PC-9 (cell line): ENCODE measurements at regions of chr17 and their contacts with region 1.

Region 1: DNA sequence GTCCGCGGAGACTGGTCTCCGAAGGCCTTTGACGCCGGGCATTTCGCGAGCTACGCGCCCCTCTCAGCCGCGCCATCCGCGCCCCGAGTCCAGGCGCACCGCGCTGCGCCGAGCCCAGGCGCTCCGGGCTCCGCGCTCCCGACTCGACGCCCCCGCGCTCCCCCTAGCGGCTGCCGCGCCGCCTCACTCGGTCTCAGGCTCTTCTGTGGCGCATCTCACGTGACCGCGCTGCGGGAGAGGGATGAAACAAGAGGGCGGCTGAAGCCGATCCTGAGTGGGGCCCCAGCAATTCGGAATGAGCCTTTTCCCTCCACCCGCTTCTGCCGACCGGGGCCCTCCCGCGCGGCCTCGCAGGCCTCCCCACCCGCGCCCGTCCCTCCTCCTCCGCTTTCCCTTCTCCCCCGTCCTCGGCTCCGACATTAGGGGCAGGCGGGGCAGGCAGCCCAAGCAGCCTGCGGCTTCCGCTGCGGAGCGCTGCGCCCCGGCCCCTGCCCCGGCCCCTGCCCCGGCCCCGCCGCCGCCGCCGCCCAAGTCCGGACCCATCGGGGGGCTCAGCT is 42.5 kb upstream of the AMZ2 start:
- DNase-seq: peak; percentile 65 to 85
- H3K4me3 ChIP-seq: peak overlapping the region; percentile 74
- H3K27ac ChIP-seq: no peak overlapping the region
- H3K4me1 ChIP-seq: peaks cover 14% of the 10 kb centered on the region; the same call in 1 of the 2 replicates
- H3K27me3 ChIP-seq: no peaks in the 10 kb centered on the region
- CTCF ChIP-seq: peak; percentile 71

Region 2: GRCh38 chr17:67993596-67994361 is 211.6 kb before region 1 on chr17:
- CTCF ChIA-PET with region 1: no interaction called
- POLR2A ChIA-PET with region 1: no interaction called
- intact Hi-C with region 1: loop called (anchors 10 kb)
- DNase-seq: peak in 1 of 2 experiments; percentile 86
- H3K4me3 ChIP-seq: peak overlapping the region; percentile 63
- H3K27ac ChIP-seq: peak overlapping the region; percentile 78
- H3K4me1 ChIP-seq: peaks cover 29% of the 10 kb centered on the region
- H3K27me3 ChIP-seq: no peaks in the 10 kb centered on the region
- CTCF ChIP-seq: no peak

Region 3: DNA sequence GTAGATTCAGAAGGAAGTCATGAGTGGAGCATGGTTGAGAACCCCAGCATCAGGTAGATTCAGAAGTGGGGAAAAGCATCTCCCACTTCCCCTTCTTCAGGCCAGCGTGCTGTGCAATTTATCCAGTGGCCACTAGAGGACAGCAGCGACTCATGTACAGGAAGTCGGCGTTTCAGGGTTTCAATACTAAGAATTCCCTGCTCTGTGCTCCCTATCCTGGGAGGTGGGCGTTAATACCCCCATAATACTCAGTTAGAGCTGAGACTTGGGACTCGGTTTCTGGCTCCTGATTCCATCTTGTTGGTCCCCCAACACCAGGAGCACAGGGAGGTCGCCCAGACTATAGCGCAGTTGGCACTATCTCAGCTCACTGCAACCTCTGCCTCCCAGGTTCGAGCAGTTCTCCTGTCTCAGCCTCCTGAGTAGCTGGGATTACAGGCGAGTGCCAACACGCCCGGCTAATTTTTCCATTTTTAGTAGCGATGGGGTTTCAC is 32.8 kb before region 1 on chr17:
- CTCF ChIA-PET with region 1: no interaction called
- POLR2A ChIA-PET with region 1: no interaction called
- intact Hi-C with region 1: loop called (anchors 1 kb)
- DNase-seq: peak; percentile 40 to 61
- H3K4me3 ChIP-seq: no peak overlapping the region
- H3K27ac ChIP-seq: no peak overlapping the region
- H3K4me1 ChIP-seq: no peaks in the 10 kb centered on the region
- H3K27me3 ChIP-seq: no peaks in the 10 kb centered on the region
- CTCF ChIP-seq: peak; percentile 98

Region 4: GRCh38 chr17:68182011-68182306 is 23.4 kb before region 1 on chr17:
- CTCF ChIA-PET with region 1: interaction called, 10 read pairs
- POLR2A ChIA-PET with region 1: no interaction called
- intact Hi-C with region 1: no loop called
- DNase-seq: no peak
- H3K4me3 ChIP-seq: no peak overlapping the region
- H3K27ac ChIP-seq: no peak overlapping the region
- H3K4me1 ChIP-seq: peaks cover 25% of the 10 kb centered on the region
- H3K27me3 ChIP-seq: no peaks in the 10 kb centered on the region
- CTCF ChIP-seq: no peak

Region 5: DNA sequence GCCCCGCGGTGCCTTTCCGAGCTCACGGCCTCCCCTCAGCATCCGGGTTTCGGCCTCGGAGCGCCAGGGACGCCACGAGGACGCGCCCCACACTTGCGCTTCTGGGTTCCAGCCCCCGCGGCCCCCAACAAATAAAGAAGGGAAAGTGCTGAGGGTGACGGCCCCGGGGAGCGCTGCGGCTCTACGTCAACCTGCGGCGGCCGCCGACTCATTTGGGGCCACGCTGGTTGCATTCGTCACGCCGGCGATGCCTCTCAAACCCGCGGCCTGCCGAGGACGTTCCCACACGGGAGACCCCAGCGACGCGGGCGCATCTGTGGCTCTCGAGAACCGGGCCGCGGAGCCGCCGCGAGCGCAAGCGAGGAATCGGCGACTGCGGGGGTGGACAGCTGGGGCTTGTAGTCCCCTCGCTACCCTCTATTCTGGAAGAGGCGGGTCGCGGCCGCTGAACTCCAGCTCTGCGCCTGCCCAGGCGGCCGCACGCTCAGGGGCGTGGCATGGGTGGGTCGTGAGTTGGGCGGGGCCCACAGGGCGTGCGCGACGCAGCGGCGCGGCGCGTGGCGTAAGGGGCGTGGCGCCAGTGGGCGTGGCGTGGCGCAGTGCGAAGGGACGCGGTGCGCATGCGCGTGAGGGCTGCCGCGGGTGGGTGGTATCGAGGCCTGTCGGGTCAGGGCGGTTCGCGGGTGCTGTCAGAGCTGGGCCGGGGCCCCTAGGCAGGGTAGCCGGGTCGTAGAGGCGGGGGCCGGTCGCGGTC is 42.3 kb after region 1 on chr17 and contains the start of gene AMZ2:
- CTCF ChIA-PET with region 1: interaction called, 5 read pairs
- POLR2A ChIA-PET with region 1: no interaction called
- intact Hi-C with region 1: loop called (anchors 2 kb)
- DNase-seq: peak; percentile 65 to 94
- H3K4me3 ChIP-seq: peak within 1 kb of the TSS; percentile 80
- H3K27ac ChIP-seq: peak within 1 kb of the TSS; percentile 63
- H3K4me1 ChIP-seq: peaks cover 10% of the 10 kb centered on the region
- H3K27me3 ChIP-seq: no peaks in the 10 kb centered on the region
- CTCF ChIP-seq: no peak
- total RNA-seq, gene AMZ2: 60.8 and 88.3 TPM in 2 replicates

Region 6: GRCh38 chr17:68398691-68399637 is 193.6 kb after region 1 on chr17:
- CTCF ChIA-PET with region 1: no interaction called
- POLR2A ChIA-PET with region 1: no interaction called
- intact Hi-C with region 1: loop called (anchors 1 kb)
- DNase-seq: peak; percentile 68 to 73
- H3K4me3 ChIP-seq: no peak overlapping the region
- H3K27ac ChIP-seq: no peak overlapping the region
- H3K4me1 ChIP-seq: peaks cover 18% of the 10 kb centered on the region
- H3K27me3 ChIP-seq: no peaks in the 10 kb centered on the region
- CTCF ChIP-seq: peak; percentile 91

Region 7: GRCh38 chr17:68435876-68436842 is 230.8 kb after region 1 on chr17:
- CTCF ChIA-PET with region 1: interaction called, 10 read pairs
- POLR2A ChIA-PET with region 1: no interaction called
- intact Hi-C with region 1: loop called (anchors 2 kb)
- DNase-seq: peak; percentile 74 to 87
- H3K4me3 ChIP-seq: peak overlapping the region; percentile 31; the same call in 1 of the 2 replicates
- H3K27ac ChIP-seq: peak overlapping the region; percentile 80
- H3K4me1 ChIP-seq: peaks cover 7% of the 10 kb centered on the region; the same call in 1 of the 2 replicates
- H3K27me3 ChIP-seq: no peaks in the 10 kb centered on the region
- CTCF ChIP-seq: peak; percentile 94